Psoas muscle (tissue), 8 donors: ENCODE measurements at regions of chr4 and their contacts with region 1.

Region 1: DNA sequence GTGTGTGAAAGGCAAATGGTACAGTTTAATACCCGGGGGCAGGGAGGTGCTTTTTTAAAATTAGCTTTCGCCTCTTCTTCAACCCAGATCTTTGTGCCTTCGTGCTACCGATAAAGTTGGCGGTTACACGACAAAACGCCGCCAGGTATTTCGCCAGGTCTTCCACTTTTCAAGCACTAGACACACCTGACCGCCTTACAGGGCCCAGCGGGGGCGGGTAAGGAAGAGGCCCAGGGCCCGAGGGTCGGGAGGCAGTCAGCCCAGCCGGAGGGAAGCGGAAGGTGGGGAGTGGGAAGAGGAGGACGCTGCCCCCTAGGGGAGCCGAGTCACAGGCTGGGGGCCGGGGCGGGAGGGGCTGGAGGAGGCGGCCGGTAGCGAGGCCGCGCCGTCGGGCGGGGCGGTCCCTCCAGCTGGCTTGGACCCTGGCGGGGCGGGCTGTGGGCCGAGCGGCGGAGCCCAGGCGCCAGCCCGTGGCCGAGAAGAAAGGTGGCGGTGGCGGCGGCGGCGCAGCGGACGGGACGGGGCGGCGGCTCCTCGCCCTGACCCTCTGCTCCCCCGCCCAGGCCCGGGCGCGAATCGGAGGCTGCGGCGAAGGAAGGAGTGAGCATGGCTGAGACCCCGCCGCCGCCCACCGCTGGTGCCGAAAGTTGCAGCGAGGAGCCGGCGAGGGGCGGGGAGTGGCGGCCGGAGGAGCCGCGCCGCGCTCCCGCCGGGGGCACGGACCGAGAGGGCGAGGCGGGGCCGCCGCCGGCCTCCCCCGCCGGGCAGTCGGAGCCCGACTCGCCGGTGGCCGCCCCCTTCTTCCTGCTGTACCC is 16.2 kb downstream of the UTP3 start:
- DNase-seq: peak; percentile 86 to 87
- ATAC-seq: peak; percentile 73 to 84 (median 76)
- H3K4me3 ChIP-seq: peak overlapping the region; percentile 85
- H3K27ac ChIP-seq: peak overlapping the region; percentile 98
- H3K4me1 ChIP-seq: peaks cover 20% of the 10 kb centered on the region
- H3K27me3 ChIP-seq: no peaks in the 10 kb centered on the region
- CTCF ChIP-seq: peak; percentile 33

Region 2: GRCh38 chr4:70801265-70801809 is 96.8 kb after region 1 on chr4:
- intact Hi-C with region 1: loop called in 1 of 2 experiments (anchors 5 kb)
- DNase-seq: no peak
- ATAC-seq: peak; percentile 47 to 71 (median 67)
- H3K4me3 ChIP-seq: no peak overlapping the region
- H3K27ac ChIP-seq: peak overlapping the region; percentile 9
- H3K4me1 ChIP-seq: peaks cover 8% of the 10 kb centered on the region
- H3K27me3 ChIP-seq: no peaks in the 10 kb centered on the region
- CTCF ChIP-seq: no peak